ENCODE measurements at regions of chr9 and their contacts with region 1.

Region 1: GRCh38 chr9:105296889-105297288 is 52.4 kb downstream of the SLC44A1 start:
- DNase-seq: peak; percentile 96
- H3K4me3 ChIP-seq: no peak overlapping the region
- H3K27ac ChIP-seq: peak overlapping the region; percentile 82
- H3K4me1 ChIP-seq: peaks cover 34% of the 10 kb centered on the region
- H3K27me3 ChIP-seq: no peaks in the 10 kb centered on the region
- CTCF ChIP-seq: no peak

Region 2: DNA sequence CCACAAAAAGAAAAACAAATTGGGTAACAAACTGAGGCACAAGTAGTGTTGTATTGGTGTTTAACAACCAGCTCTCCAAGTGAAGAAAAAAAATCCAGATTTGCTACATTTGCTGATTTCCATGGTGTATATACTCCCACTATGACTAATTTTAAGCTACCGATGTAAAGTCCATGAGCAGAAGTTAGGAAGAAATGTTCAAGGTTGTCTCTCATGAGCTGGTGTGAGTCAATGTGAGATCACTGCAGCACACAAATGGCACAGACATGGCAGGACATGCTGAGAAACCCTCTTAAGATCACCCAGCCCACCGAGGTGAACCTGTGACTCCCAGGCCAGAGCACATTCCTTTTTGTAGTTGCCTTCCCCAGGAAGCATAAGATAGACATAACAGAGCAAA is 16.2 kb before region 1 on chr9:
- CTCF ChIA-PET with region 1: no interaction called
- dilution Hi-C with region 1: no loop called
- in situ Hi-C with region 1: no loop called
- intact Hi-C with region 1: loop called (anchors 2 kb)
- DNase-seq: peak; percentile 99
- H3K4me3 ChIP-seq: no peak overlapping the region
- H3K27ac ChIP-seq: peak overlapping the region; percentile 96
- H3K4me1 ChIP-seq: peaks cover 23% of the 10 kb centered on the region
- H3K27me3 ChIP-seq: no peaks in the 10 kb centered on the region
- CTCF ChIP-seq: no peak